Naive thymus-derived CD4-positive, alpha-beta T cell (primary cell): ENCODE measurements at regions of chr3 and their contacts with region 1.

Region 1: DNA sequence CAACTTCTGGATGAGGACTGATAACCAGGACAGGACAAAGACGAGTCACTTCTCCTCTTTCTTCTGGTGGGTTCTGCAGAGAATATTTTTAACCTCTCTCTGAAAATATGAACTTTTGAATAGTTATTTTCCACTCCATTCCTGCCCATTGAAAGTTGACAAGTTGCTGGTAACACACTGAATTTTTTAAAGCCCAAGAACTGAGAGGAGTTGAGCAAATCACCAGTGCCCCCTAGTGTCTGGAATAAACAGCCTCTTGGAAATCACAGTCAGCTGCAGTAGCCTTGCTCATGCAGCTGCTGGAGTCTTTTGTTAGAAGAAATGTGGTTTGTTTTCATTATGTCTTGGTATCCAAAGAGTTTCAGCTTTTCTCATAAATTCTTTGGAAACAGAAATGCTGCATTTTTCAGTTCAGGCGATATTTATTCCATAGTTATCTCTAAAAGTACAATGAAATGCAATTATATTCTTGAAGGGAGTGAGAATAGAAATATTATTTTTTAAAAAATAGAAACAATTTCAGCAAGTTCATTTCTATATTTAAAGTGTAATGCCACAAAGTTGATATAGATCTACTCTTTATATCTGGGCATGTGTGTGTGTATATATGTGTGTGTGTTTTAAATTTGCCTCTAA is 741.0 kb upstream of the CBLB start:
- DNase-seq: peak in 8 of 9 donors; percentile 37 to 71 (median 60)
- ATAC-seq: peak; percentile 81
- H3K4me3 ChIP-seq: no peak overlapping the region
- H3K4me3 Mint-ChIP-seq: no peak overlapping the region
- H3K27ac ChIP-seq: no peak overlapping the region
- H3K27ac Mint-ChIP-seq: no peak overlapping the region
- H3K4me1 ChIP-seq: no peaks in the 10 kb centered on the region
- H3K4me1 Mint-ChIP-seq: peaks cover 0 to 12% (median 0%) of the 10 kb centered on the region in 7 donors
- H3K27me3 ChIP-seq: no peaks in the 10 kb centered on the region
- H3K27me3 Mint-ChIP-seq: peaks cover 0 to 4% (median 3%) of the 10 kb centered on the region in 5 donors

Region 2: DNA sequence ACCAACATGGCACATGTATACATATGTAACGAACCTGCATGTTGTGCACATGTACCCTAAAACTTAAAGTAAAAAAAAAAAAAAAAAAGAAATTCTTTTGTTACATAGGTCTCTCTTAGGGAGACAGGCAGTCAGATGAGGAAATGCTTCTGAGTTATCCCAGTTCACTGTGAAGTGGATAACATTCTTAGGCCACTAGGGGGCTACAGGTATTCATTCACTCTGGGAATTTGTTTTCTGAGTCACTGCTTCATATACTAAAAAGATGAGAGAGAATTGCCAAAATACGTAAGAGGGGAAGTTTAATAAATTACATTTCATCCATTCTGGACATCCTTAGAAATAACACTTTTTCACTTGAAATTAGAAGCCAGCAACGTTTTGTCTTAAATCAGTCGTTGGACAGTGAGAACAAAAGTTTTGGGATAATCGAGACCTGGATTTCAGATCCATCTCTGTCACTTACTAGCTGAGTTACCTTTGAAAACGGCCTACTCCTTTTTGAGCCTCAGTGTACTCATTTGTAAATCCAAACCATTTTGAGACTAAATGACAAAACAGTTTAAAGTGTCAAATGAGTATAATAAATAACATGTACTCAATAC is 1981.5 kb before region 1 on chr3:
- CTCF ChIA-PET with region 1: no interaction called
- POLR2A ChIA-PET with region 1: no interaction called
- intact Hi-C with region 1: loop called in 1 of 2 experiments (anchors 1 kb)
- DNase-seq: peak in 2 of 9 donors; percentile 1 to 2
- ATAC-seq: no peak
- H3K4me3 ChIP-seq: no peak overlapping the region
- H3K4me3 Mint-ChIP-seq: no peak overlapping the region
- H3K27ac ChIP-seq: no peak overlapping the region
- H3K27ac Mint-ChIP-seq: no peak overlapping the region
- H3K4me1 ChIP-seq: no peaks in the 10 kb centered on the region
- H3K4me1 Mint-ChIP-seq: no peaks in the 10 kb centered on the region
- H3K27me3 ChIP-seq: no peaks in the 10 kb centered on the region
- H3K27me3 Mint-ChIP-seq: peaks cover 0 to 4% (median 0%) of the 10 kb centered on the region in 5 donors

Region 3: DNA sequence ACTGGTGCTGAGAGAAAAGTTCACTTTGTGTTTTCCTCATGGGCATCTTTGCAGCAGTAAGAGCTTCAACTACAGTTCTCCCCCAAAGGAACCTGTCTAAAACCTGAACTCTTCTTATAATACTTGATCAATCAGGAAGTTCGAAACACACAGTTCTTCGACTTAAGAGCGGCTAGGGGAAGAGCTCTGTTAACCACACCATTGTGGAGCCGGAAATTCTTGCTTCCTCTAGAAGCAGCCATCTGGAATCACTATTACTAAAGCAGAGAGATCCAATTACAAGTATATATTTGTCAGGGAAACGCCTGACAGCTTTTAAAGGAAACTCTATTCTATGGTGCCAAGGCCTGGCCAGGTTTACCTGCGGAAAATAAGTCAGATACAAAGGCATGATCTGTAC is 403.6 kb before region 1 on chr3:
- CTCF ChIA-PET with region 1: no interaction called
- POLR2A ChIA-PET with region 1: no interaction called
- intact Hi-C with region 1: loop called in 1 of 2 experiments (anchors 2 kb)
- DNase-seq: peak in 7 of 9 donors; percentile 12 to 48 (median 36)
- ATAC-seq: peak; percentile 81
- H3K4me3 ChIP-seq: peak overlapping the region; percentile 19
- H3K4me3 Mint-ChIP-seq: peak overlapping the region; percentile 51 to 79 (median 72)
- H3K27ac ChIP-seq: peak overlapping the region; percentile 32
- H3K27ac Mint-ChIP-seq: peak overlapping the region; percentile 3 to 91 (median 76)
- H3K4me1 ChIP-seq: peaks cover 14 to 18% of the 10 kb centered on the region in 2 donors
- H3K4me1 Mint-ChIP-seq: peaks cover 13 to 47% (median 40%) of the 10 kb centered on the region in 7 donors
- H3K27me3 ChIP-seq: no peaks in the 10 kb centered on the region
- H3K27me3 Mint-ChIP-seq: no peaks in the 10 kb centered on the region

Region 4: DNA sequence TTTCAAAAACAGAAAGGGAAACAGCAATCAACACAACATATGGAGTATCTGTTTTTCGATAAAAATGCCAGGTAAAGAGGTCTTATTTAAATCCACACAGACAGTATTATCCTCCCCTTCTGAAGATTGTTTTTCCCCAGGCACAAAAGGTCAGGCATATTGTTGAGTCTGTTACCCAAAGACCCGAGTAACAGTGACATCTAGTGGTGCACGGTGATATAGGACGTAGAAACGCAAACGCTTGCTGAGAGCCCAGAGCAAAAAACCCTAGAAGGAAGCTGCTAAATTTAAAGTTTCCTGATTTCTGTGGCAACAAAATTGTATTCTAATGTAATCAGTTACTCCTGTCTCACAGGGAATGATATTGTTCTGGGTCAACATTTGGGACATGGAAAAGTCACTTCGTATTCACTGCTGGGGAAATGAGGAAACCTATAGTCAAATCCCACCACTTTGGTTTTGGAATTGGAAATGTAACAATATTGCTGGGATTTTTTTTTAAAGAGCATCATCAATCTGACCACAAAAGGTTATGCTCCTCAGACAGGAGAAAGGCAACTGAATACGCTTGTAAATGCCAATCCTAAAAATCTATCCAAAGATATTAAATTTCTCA is 454.8 kb after region 1 on chr3:
- CTCF ChIA-PET with region 1: no interaction called
- POLR2A ChIA-PET with region 1: no interaction called
- intact Hi-C with region 1: loop called in 1 of 2 experiments (anchors 10 kb)
- DNase-seq: peak; percentile 6 to 57 (median 39)
- ATAC-seq: peak; percentile 82
- H3K4me3 ChIP-seq: no peak overlapping the region
- H3K4me3 Mint-ChIP-seq: no peak overlapping the region
- H3K27ac ChIP-seq: no peak overlapping the region
- H3K27ac Mint-ChIP-seq: no peak overlapping the region
- H3K4me1 ChIP-seq: peaks cover 4 to 7% of the 10 kb centered on the region in 2 donors
- H3K4me1 Mint-ChIP-seq: peaks cover 6 to 15% (median 10%) of the 10 kb centered on the region in 7 donors
- H3K27me3 ChIP-seq: no peaks in the 10 kb centered on the region
- H3K27me3 Mint-ChIP-seq: peaks cover 0 to 17% (median 8%) of the 10 kb centered on the region in 5 donors